ENCODE measurements at regions of chr10 and their contacts with region 1.

Region 1: DNA sequence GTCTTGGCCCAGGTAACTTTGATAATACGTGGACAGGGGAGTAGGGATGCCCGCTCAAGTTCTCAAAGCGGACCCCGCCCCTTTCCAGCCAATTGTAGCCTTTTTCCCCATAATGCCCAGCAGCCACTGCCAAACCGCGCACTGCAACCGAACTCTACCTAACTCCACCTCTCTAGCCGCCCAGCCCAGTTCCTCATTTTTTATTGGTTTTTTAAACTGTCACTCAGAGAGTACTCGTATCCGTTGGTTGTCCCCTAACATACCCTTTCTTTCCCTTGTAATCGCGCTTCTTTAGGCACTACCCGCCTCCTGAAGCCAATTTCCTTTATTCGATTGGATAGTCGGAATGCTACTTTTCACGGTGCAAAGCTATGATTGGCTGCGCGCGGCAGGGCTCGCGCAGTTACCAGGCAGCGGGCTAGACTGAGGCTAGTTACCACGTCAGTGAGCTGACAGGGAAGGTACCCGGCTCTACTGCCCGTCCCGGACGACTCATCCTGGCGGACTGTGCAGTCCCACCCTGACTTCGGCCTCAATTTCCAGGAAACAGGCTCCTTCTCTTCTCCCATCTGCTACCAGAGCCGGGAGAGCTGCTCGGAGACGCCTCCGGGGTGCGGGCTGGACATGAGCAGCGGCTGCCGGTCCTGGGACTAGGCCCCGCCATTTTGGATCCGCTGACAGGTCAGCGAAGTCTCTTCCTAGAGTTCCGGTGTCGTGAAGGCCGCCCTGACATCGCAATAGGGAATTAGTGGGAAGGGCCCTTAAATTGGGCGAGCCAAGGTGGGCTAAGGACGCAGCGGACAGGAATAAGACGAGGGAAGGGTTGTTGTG is at the start of gene GBF1:
- DNase-seq: peak; percentile 100
- ATAC-seq: peak; percentile 87
- H3K4me3 ChIP-seq: peak within 1 kb of the TSS; percentile 78
- H3K27ac ChIP-seq: peak within 1 kb of the TSS; percentile 81
- H3K4me1 ChIP-seq: peaks cover 15% of the 10 kb centered on the region
- H3K27me3 ChIP-seq: peaks cover 5% of the 10 kb centered on the region
- CTCF ChIP-seq: no peak
- POLR2A ChIP-seq: peak; percentile 97
- RAD21 ChIP-seq: 0 out of 2 replicates have a peak, but pooled peaks have one; percentile 4
- total RNA-seq, gene GBF1: 36.4 and 38.7 TPM in 2 replicates

Region 2: GRCh38 chr10:101906586-101907183 is 338.6 kb before region 1 on chr10:
- CTCF ChIA-PET with region 1: no interaction called
- POLR2A ChIA-PET with region 1: no interaction called
- dilution Hi-C with region 1: no loop called
- in situ Hi-C with region 1: no loop called
- intact Hi-C with region 1: no loop called
- DNase-seq: no peak
- ATAC-seq: no peak
- H3K4me3 ChIP-seq: no peak overlapping the region
- H3K27ac ChIP-seq: no peak overlapping the region
- H3K4me1 ChIP-seq: no peaks in the 10 kb centered on the region
- H3K27me3 ChIP-seq: no peaks in the 10 kb centered on the region
- CTCF ChIP-seq: no peak
- POLR2A ChIP-seq: no peak
- RAD21 ChIP-seq: no peak

Region 3: DNA sequence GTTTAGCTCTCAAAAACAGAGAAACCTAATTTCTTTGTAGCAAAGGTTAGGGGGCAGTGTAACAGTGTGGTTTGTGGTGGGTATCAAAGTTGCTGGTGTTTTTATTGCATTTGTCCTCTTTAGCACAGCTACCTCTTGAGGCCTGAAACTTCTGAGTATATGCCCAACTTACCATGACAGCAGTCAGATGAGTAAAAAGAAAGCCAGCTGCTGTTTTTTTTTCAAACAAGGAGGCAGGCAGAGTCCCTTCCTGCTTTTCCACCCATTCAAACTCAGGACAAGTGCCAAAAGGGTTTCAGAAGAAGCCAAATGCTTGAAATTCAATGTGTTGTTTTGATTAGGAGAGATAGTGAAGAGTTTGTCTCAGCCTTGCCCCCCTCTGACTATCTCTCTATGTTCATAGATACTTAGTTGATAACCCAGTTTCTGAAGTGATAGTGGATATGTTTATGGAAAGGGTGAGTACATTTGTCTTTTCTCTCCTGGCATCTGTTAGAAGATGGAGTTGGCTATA is 23.1 kb after region 1 on chr10:
- CTCF ChIA-PET with region 1: no interaction called
- POLR2A ChIA-PET with region 1: interaction called, 3 read pairs
- dilution Hi-C with region 1: no loop called
- in situ Hi-C with region 1: no loop called
- intact Hi-C with region 1: loop called (anchors 2 kb)
- DNase-seq: peak; percentile 59
- ATAC-seq: peak; percentile 66
- H3K4me3 ChIP-seq: no peak overlapping the region
- H3K27ac ChIP-seq: no peak overlapping the region
- H3K4me1 ChIP-seq: peaks cover 17% of the 10 kb centered on the region
- H3K27me3 ChIP-seq: no peaks in the 10 kb centered on the region
- CTCF ChIP-seq: no peak
- POLR2A ChIP-seq: no peak
- RAD21 ChIP-seq: no peak

Region 4: DNA sequence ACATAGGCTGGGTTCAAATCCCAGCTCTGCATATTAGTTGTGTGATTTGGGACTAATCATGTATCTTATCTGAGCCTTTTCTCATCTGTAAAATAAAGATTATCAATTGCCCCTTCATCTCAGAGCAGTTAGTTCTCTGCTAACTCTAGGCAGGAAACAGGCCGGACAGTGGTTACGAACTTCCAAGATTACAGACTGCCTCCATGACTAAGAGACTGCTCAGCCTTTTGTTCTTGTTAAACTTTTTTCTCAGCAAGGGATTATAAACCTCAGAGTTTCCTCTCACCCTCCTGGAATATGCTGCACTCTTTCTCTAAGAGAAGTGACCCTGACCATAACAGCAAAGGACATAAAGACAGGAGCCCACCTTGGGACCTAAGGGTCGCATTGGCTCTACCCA is 97.6 kb after region 1 on chr10:
- CTCF ChIA-PET with region 1: no interaction called
- POLR2A ChIA-PET with region 1: no interaction called
- dilution Hi-C with region 1: no loop called
- in situ Hi-C with region 1: no loop called
- intact Hi-C with region 1: loop called (anchors 5 kb)
- DNase-seq: peak; percentile 86
- ATAC-seq: peak; percentile 82
- H3K4me3 ChIP-seq: no peak overlapping the region
- H3K27ac ChIP-seq: 0 out of 2 replicates have a peak overlapping the region, but pooled peaks have one; percentile 17
- H3K4me1 ChIP-seq: peaks cover 14% of the 10 kb centered on the region
- H3K27me3 ChIP-seq: no peaks in the 10 kb centered on the region
- CTCF ChIP-seq: no peak
- POLR2A ChIP-seq: no peak
- RAD21 ChIP-seq: no peak

Region 5: GRCh38 chr10:102511583-102512274 is 266.4 kb after region 1 on chr10:
- CTCF ChIA-PET with region 1: no interaction called
- POLR2A ChIA-PET with region 1: no interaction called
- dilution Hi-C with region 1: no loop called
- in situ Hi-C with region 1: no loop called
- intact Hi-C with region 1: no loop called
- DNase-seq: no peak
- ATAC-seq: no peak
- H3K4me3 ChIP-seq: no peak overlapping the region
- H3K27ac ChIP-seq: no peak overlapping the region
- H3K4me1 ChIP-seq: peaks cover 7% of the 10 kb centered on the region
- H3K27me3 ChIP-seq: no peaks in the 10 kb centered on the region
- CTCF ChIP-seq: no peak
- POLR2A ChIP-seq: no peak
- RAD21 ChIP-seq: no peak